Breast epithelium (tissue), 4 donors: ENCODE measurements at regions of chr1 and their contacts with region 1.

Region 1: GRCh38 chr1:19096036-19096833 is 113.8 kb downstream of the UBR4 start:
- DNase-seq: peak in 1 of 2 donors; percentile 75
- H3K4me3 ChIP-seq: no peak overlapping the region
- H3K27ac ChIP-seq: no peak overlapping the region
- H3K4me1 ChIP-seq: no peaks in the 10 kb centered on the region
- H3K27me3 ChIP-seq: no peaks in the 10 kb centered on the region
- CTCF ChIP-seq: peak; percentile 23 to 70 (median 54)
- POLR2A ChIP-seq: no peak

Region 2: DNA sequence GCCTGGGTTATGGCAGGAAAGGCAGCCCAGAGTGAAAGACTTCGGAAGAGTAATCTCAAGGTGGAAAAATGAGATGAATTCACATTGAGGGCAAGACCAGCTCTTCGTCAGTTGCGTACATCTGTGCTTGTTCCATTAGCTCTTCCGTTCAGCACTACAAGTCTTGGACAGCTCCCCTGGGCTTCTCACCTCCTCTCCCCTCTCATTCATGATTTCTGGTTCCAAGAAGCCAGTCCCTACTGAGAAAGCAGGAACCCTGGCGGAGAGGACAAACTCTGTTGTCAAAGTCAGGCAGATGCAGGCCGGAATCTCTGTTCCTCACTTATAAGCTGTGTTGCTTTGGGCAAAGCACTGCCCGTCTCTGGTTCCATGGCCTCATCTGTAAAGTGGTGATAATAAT is 1264.6 kb before region 1 on chr1:
- intact Hi-C with region 1: loop called (anchors 5 kb)
- DNase-seq: no peak
- H3K4me3 ChIP-seq: no peak overlapping the region
- H3K27ac ChIP-seq: no peak overlapping the region
- H3K4me1 ChIP-seq: no peaks in the 10 kb centered on the region
- H3K27me3 ChIP-seq: peaks cover 0 to 34% of the 10 kb centered on the region in 2 donors
- CTCF ChIP-seq: no peak
- POLR2A ChIP-seq: no peak

Region 3: GRCh38 chr1:18902523-18903290 is 193.5 kb before region 1 on chr1 and contains the start of gene ALDH4A1:
- intact Hi-C with region 1: loop called (anchors 5 kb)
- DNase-seq: peak; percentile 98 to 99
- H3K4me3 ChIP-seq: peak within 1 kb of the TSS; percentile 65 to 97 (median 73)
- H3K27ac ChIP-seq: peak within 1 kb of the TSS; percentile 90 to 96
- H3K4me1 ChIP-seq: peaks cover 0 to 7% of the 10 kb centered on the region in 2 donors
- H3K27me3 ChIP-seq: no peaks in the 10 kb centered on the region
- CTCF ChIP-seq: peak in 1 of 3 donors; percentile 19
- POLR2A ChIP-seq: no peak
- total RNA-seq, gene ALDH4A1: 15.7 to 81.0 (median 23.7) TPM

Region 4: GRCh38 chr1:19341201-19342072 is 245.2 kb after region 1 on chr1:
- intact Hi-C with region 1: loop called (anchors 10 kb)
- DNase-seq: peak in 1 of 2 donors; percentile 78
- H3K4me3 ChIP-seq: no peak overlapping the region
- H3K27ac ChIP-seq: peak overlapping the region; percentile 33 to 58
- H3K4me1 ChIP-seq: peaks cover 4 to 6% of the 10 kb centered on the region in 2 donors
- H3K27me3 ChIP-seq: no peaks in the 10 kb centered on the region
- CTCF ChIP-seq: peak; percentile 65 to 88 (median 82)
- POLR2A ChIP-seq: no peak